B cell (primary cell): ENCODE measurements at regions of chr15 and their contacts with region 1.

Region 1: GRCh38 chr15:66862878-66863335 is 160.9 kb downstream of the SMAD6 start:
- DNase-seq: peak; percentile 91
- ATAC-seq: peak; percentile 61
- H3K4me3 ChIP-seq: no peak overlapping the region
- H3K4me3 Mint-ChIP-seq: no peak overlapping the region
- H3K27ac ChIP-seq: peak overlapping the region; percentile 51 to 61
- H3K27ac Mint-ChIP-seq: peak overlapping the region; percentile 63
- H3K4me1 ChIP-seq: peaks cover 33 to 47% of the 10 kb centered on the region in 2 donors
- H3K4me1 Mint-ChIP-seq: peaks cover 49% of the 10 kb centered on the region
- H3K27me3 ChIP-seq: peaks cover 0 to 3% (median 0%) of the 10 kb centered on the region in 4 experiments
- H3K27me3 Mint-ChIP-seq: no peaks in the 10 kb centered on the region
- CTCF ChIP-seq: peak; percentile 89

Region 2: GRCh38 chr15:66673410-66674322 is 189.2 kb before region 1 on chr15:
- CTCF ChIA-PET with region 1: no interaction called
- POLR2A ChIA-PET with region 1: no interaction called
- intact Hi-C with region 1: no loop called
- DNase-seq: no peak
- ATAC-seq: peak; percentile 31
- H3K4me3 ChIP-seq: no peak overlapping the region
- H3K4me3 Mint-ChIP-seq: no peak overlapping the region
- H3K27ac ChIP-seq: no peak overlapping the region
- H3K27ac Mint-ChIP-seq: no peak overlapping the region
- H3K4me1 ChIP-seq: peaks cover 3 to 8% of the 10 kb centered on the region in 2 donors
- H3K4me1 Mint-ChIP-seq: peaks cover 14% of the 10 kb centered on the region
- H3K27me3 ChIP-seq: peaks cover 0 to 5% (median 0%) of the 10 kb centered on the region in 4 experiments
- H3K27me3 Mint-ChIP-seq: peaks cover 5% of the 10 kb centered on the region
- CTCF ChIP-seq: no peak

Region 3: GRCh38 chr15:66700802-66701421 is 162.0 kb before region 1 on chr15:
- CTCF ChIA-PET with region 1: no interaction called
- POLR2A ChIA-PET with region 1: no interaction called
- intact Hi-C with region 1: loop called (anchors 5 kb)
- DNase-seq: peak; percentile 88
- ATAC-seq: peak; percentile 84
- H3K4me3 ChIP-seq: peak overlapping the region; percentile 63 to 80 (median 77)
- H3K4me3 Mint-ChIP-seq: peak overlapping the region; percentile 94
- H3K27ac ChIP-seq: peak overlapping the region in 1 of 2 donors; percentile 47
- H3K27ac Mint-ChIP-seq: peak overlapping the region; percentile 85
- H3K4me1 ChIP-seq: peaks cover 17 to 27% of the 10 kb centered on the region in 2 donors
- H3K4me1 Mint-ChIP-seq: peaks cover 19% of the 10 kb centered on the region
- H3K27me3 ChIP-seq: peaks cover 0 to 34% (median 7%) of the 10 kb centered on the region in 4 experiments
- H3K27me3 Mint-ChIP-seq: peaks cover 17% of the 10 kb centered on the region
- CTCF ChIP-seq: no peak

Region 4: GRCh38 chr15:66907826-66908743 is 45.2 kb after region 1 on chr15:
- CTCF ChIA-PET with region 1: interaction called, 12 read pairs
- POLR2A ChIA-PET with region 1: no interaction called
- intact Hi-C with region 1: loop called (anchors 1 kb)
- DNase-seq: peak; percentile 71
- ATAC-seq: peak; percentile 67
- H3K4me3 ChIP-seq: peak overlapping the region in 1 of 5 experiments; percentile 3
- H3K4me3 Mint-ChIP-seq: no peak overlapping the region
- H3K27ac ChIP-seq: peak overlapping the region in 1 of 2 donors; percentile 32
- H3K27ac Mint-ChIP-seq: peak overlapping the region; percentile 73
- H3K4me1 ChIP-seq: peaks cover 22 to 23% of the 10 kb centered on the region in 2 donors
- H3K4me1 Mint-ChIP-seq: peaks cover 38% of the 10 kb centered on the region
- H3K27me3 ChIP-seq: no peaks in the 10 kb centered on the region
- H3K27me3 Mint-ChIP-seq: peaks cover 12% of the 10 kb centered on the region
- CTCF ChIP-seq: no peak